Activated CD8-positive, alpha-beta T cell treated with anti-CD3 and anti-CD28 coated beads for 36 hours (primary cell): ENCODE measurements at regions of chr20 and their contacts with region 1.

Region 1: DNA sequence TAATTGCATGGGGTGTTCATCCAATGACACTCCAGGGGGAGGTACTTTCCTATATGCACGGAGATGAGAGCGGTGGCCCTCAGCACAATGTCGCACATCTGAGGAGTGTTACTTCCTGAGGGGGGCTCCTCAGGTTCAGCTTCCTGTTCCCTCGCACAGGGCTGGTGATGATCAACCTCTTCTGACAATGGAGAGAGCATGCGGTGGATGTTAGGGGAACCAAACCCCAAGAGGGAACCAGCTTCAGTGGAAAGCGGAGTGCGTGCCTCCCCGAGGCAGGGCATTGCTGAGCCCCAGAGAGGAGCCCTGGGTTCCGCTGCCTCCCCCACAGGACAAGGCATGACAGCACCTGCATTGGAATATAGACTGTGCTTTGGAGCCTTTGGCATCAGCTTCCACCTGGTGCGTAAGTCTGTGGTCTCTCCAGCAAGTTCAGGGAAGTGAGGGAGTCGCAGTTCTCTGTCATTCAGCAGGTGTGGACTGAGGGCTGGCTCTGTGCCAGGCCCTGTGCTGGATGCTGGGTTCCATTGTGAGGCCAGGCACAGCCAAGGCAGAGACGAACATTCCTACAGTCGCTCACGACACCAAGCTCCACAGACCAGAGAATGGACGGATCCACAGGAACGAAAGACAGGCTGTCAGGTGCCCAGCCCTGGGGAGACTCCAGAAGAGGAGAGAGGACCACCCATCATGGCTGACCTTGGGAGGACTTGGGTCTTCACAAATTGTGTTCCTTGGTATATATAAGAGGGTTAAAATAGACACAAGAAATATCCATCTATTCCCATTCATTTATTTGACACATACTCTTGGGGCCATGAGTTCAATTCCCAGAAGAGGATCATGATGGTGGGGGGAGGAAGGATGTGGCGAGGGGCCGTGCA is 3.9 kb upstream of the ZNF831 start:
- DNase-seq: peak; percentile 87
- ATAC-seq: peak; percentile 89
- H3K4me3 Mint-ChIP-seq: peak overlapping the region; percentile 95
- H3K27ac Mint-ChIP-seq: peak overlapping the region; percentile 98
- H3K4me1 Mint-ChIP-seq: peaks cover 74% of the 10 kb centered on the region
- H3K27me3 Mint-ChIP-seq: no peaks in the 10 kb centered on the region
- CTCF ChIP-seq: no peak

Region 2: DNA sequence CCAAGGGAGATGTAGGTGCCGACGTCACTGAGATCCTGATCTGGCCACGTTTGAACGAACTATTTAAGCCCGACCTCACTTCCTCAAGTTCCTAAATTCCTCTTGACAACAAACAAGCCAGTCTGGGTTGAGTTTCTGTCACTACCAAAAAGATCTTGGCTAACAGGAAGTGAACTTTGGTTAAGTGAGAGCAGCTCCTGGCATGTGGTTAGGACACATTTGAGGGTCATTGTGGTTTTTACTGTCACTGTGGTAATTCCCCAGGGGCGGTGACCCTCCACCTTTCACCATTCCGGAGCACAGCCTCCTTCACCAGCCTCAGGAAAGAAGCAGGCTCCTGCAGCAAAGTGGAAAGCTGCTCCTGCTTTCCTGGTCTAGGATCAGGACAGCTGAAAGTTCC is 39.2 kb before region 1 on chr20:
- CTCF ChIA-PET with region 1: interaction called, 16 read pairs
- POLR2A ChIA-PET with region 1: interaction called, 32 read pairs
- intact Hi-C with region 1: loop called (anchors 5 kb)
- DNase-seq: peak; percentile 67
- ATAC-seq: peak; percentile 15
- H3K4me3 Mint-ChIP-seq: no peak overlapping the region
- H3K27ac Mint-ChIP-seq: peak overlapping the region; percentile 97
- H3K4me1 Mint-ChIP-seq: peaks cover 75% of the 10 kb centered on the region
- H3K27me3 Mint-ChIP-seq: no peaks in the 10 kb centered on the region
- CTCF ChIP-seq: no peak

Region 3: DNA sequence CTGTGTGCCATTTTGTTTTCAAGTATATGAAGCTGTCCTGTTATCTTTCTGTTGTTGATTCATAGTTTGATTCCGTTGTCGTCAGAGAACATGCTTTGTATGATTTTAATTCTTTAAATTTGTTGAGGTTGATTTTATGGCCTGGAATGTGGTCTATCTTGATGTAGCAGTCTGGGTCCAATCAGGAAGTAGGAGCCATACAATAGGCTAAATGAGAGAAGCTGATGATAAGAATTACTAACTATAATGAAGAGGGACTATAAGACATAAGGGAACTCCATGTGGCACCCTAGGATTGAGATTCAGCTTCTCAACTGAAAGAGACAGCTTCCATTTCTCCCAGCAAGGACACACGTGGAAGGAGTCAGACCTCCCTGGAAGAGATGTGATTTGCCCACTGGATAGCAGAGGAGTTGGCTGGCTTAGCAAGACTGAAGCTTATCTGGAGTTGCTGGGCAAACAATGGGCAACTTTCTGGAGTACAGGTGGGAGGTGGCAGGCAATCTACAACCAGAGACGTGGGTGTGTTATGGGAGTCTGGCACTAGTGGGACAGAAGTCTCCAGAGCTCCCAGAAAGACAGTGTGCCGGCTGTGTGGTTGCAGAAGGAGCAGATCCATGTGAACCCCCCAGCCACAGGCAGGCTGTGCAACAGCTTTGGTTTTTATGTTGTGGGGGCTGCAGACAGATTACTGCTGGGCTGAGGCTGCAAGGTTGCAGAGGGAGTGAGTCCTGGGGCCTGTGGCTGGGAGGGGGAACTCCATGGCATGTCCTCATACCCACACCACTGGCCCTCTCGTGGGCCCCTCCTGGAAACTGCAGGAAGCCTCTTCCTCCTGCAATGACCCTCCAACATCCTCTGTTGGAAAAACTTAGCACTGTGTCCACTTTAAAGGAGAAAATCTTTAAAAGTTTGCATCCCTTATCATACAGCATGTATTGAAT is 10.9 kb after region 1 on chr20:
- CTCF ChIA-PET with region 1: interaction called, 7 read pairs
- POLR2A ChIA-PET with region 1: interaction called, 44 read pairs
- intact Hi-C with region 1: no loop called
- DNase-seq: no peak
- ATAC-seq: no peak
- H3K4me3 Mint-ChIP-seq: no peak overlapping the region
- H3K27ac Mint-ChIP-seq: peak overlapping the region; percentile 74
- H3K4me1 Mint-ChIP-seq: peaks cover 91% of the 10 kb centered on the region
- H3K27me3 Mint-ChIP-seq: no peaks in the 10 kb centered on the region
- CTCF ChIP-seq: no peak

Region 4: DNA sequence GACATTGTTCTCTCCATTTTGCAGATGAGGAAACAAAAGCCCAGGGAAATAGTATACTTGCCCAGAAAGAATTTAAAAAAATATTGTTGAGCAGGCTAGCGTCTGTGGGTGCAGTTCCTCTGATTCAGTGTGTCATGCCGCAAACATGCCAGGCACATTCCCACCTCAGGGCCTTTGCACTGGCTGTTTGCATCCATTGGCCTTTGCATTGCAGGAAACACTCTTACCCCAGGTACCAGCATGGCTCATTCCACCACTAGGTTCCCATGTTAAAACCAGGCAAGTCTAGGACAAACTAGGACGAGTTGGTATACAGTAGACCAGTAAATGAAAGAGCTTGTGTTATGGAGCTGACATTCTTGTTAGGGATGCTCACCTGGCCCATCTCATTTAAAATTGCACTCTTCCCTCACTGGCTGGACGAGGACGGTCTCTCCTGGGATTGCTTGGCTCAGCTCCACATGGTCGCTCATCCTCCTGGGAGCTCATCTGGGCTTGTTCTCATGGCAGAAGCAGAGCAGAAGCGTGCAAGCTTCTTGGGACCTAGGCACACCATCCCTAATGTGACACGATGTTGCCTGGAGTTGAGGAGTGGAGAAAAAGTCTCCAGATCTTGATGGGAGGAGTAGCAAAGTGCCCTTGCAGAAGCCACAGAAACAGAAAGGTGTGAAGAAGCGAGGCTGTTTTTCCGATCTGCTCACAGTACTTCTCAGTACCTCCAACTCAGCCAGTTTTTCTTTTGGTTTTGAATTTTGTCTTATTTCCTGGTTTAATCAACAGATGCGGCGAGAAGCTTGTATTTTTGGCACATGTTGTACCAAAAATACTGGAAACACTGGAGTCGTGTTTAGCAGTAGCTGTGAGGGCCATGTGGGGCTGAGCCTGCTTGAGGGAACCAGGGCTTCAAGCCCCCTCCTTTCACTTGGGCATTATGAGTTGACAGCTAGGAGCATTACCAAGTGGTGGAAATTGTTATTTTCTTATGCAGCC is 17.8 kb after region 1 on chr20:
- CTCF ChIA-PET with region 1: interaction called, 6 read pairs
- POLR2A ChIA-PET with region 1: interaction called, 26 read pairs
- intact Hi-C with region 1: no loop called
- DNase-seq: peak; percentile 70
- ATAC-seq: peak; percentile 90
- H3K4me3 Mint-ChIP-seq: peak overlapping the region; percentile 61
- H3K27ac Mint-ChIP-seq: peak overlapping the region; percentile 95
- H3K4me1 Mint-ChIP-seq: peaks cover 85% of the 10 kb centered on the region
- H3K27me3 Mint-ChIP-seq: no peaks in the 10 kb centered on the region
- CTCF ChIP-seq: no peak

Region 5: GRCh38 chr20:59385480-59385879 is 225.7 kb after region 1 on chr20:
- CTCF ChIA-PET with region 1: no interaction called
- POLR2A ChIA-PET with region 1: no interaction called
- intact Hi-C with region 1: no loop called
- DNase-seq: peak; percentile 13
- ATAC-seq: peak; percentile 55
- H3K4me3 Mint-ChIP-seq: no peak overlapping the region
- H3K27ac Mint-ChIP-seq: peak overlapping the region; percentile 1
- H3K4me1 Mint-ChIP-seq: peaks cover 12% of the 10 kb centered on the region
- H3K27me3 Mint-ChIP-seq: no peaks in the 10 kb centered on the region
- CTCF ChIP-seq: no peak